CD14-positive monocyte (primary cell): ENCODE measurements at regions of chr21 and their contacts with region 1.

Region 1: DNA sequence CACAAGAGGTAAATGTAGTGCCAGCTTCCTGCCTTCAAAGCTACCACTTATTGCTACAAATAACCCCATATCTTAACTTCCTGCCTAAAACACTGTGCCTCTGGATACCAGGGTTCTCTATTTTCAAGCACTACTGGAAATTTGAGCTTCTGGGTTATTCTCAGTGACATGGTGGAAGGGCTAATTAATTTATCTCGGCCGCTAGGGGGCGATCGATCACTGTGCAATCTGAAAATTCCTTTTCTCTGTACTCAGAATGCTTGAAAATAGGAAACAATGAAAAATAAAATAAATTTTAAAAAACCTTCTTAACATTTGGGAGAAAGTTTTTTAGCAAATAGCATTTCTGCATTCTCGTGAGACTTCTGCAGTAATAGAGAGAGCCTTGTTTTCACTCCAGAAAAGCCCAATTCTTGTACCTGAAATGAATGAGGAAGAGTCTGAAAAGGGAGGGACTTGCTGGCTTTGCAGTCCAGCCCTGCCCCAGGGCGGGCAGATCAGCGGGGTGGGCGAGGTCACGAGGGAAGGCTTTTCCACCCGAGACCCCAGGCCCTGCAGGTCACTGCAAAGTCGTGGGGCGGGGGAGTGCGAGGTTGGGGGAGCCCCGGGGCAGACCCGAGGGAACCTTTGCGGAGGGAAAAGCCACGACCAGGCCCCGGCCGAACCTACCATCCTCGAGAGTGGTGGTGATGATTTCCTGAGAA is 276.7 kb downstream of the PCP4 start:
- DNase-seq: peak; percentile 2 to 21 (median 19)
- H3K4me3 ChIP-seq: no peak overlapping the region
- H3K4me3 Mint-ChIP-seq: no peak overlapping the region
- H3K27ac ChIP-seq: no peak overlapping the region
- H3K27ac Mint-ChIP-seq: no peak overlapping the region
- H3K4me1 ChIP-seq: no peaks in the 10 kb centered on the region
- H3K4me1 Mint-ChIP-seq: no peaks in the 10 kb centered on the region
- H3K27me3 ChIP-seq: no peaks in the 10 kb centered on the region
- H3K27me3 Mint-ChIP-seq: peaks cover 0 to 4% (median 2%) of the 10 kb centered on the region in 3 donors
- CTCF ChIP-seq: peak; percentile 89

Region 2: DNA sequence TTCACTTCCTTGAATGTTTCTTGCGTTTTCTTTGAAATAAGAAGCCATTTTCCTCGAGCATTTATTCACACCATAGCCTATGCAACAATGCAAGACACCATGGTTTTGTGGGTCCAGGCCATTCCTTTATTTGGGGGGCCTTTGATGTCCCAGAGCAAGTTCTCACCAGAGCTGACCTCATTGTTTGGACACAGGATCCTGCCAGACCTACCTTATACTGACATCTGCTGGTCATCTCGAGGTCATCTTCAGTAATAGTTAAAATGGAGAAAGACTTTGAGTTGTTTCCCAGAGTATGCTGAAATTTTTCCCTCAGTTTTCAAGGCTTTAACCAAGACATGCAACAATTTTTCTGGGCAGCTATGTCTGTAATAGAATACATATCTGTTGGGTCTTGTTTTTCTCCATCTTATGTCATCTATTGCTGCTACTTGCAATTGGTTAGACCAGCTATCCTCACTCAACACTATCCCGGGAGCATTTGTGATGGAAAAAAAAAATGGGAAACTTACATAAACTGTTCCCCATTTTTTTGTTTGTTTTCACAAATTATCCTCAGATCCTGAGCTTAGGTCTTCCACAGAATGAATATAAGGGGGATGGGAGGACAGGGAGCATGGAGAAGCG is 990.0 kb after region 1 on chr21:
- intact Hi-C with region 1: loop called in 1 of 2 experiments (anchors 10 kb)
- DNase-seq: peak in 1 of 3 donors; percentile 4
- H3K4me3 ChIP-seq: no peak overlapping the region
- H3K4me3 Mint-ChIP-seq: no peak overlapping the region
- H3K27ac ChIP-seq: no peak overlapping the region
- H3K27ac Mint-ChIP-seq: no peak overlapping the region
- H3K4me1 ChIP-seq: no peaks in the 10 kb centered on the region
- H3K4me1 Mint-ChIP-seq: no peaks in the 10 kb centered on the region
- H3K27me3 ChIP-seq: no peaks in the 10 kb centered on the region
- H3K27me3 Mint-ChIP-seq: peaks cover 2 to 8% (median 3%) of the 10 kb centered on the region in 3 donors
- CTCF ChIP-seq: peak; percentile 36